Breast epithelium (tissue), 4 donors: ENCODE measurements at regions of chr21 and their contacts with region 1.

Region 1: DNA sequence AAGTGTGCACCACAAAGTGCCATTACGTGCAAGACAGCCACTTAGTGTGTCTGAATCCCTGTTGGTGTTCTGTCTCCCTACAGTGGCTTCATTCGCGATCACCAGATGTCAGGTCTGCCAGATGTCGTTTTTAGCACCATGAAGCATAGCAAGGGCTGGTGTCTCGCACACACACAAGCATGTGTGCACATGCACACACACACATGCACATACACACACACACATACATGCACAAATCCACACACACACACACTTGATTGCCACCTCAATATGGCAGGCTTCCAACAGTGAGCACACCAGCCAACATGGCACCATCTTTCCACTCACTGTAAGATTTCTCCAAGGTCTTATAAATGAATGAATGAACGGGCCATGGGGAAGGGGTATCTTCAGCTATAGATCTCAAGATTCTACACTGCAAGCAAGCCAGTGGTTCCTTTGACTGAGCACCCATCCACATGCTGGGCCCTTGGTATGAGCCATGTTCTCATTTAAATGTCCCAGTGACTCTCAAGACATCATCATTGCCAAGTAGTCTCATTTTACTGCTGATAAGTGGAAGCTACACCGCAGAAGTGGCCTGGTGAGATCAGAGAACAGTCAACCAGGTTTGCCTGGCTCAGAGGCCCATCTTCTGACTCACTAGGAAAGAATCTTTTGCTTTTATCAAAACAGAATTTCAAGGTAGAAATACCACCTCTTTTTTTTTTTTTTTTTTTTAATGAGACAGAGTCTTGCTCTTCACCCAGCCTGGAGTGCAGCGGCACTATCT is 84.9 kb downstream of the SIM2 start:
- DNase-seq: no peak
- H3K4me3 ChIP-seq: no peak overlapping the region
- H3K27ac ChIP-seq: no peak overlapping the region
- H3K4me1 ChIP-seq: no peaks in the 10 kb centered on the region
- H3K27me3 ChIP-seq: no peaks in the 10 kb centered on the region
- CTCF ChIP-seq: no peak
- POLR2A ChIP-seq: no peak

Region 2: GRCh38 chr21:36047139-36047538 is 736.7 kb before region 1 on chr21:
- intact Hi-C with region 1: no loop called
- DNase-seq: no peak
- H3K4me3 ChIP-seq: no peak overlapping the region
- H3K27ac ChIP-seq: no peak overlapping the region
- H3K4me1 ChIP-seq: no peaks in the 10 kb centered on the region
- H3K27me3 ChIP-seq: no peaks in the 10 kb centered on the region
- CTCF ChIP-seq: no peak
- POLR2A ChIP-seq: no peak

Region 3: DNA sequence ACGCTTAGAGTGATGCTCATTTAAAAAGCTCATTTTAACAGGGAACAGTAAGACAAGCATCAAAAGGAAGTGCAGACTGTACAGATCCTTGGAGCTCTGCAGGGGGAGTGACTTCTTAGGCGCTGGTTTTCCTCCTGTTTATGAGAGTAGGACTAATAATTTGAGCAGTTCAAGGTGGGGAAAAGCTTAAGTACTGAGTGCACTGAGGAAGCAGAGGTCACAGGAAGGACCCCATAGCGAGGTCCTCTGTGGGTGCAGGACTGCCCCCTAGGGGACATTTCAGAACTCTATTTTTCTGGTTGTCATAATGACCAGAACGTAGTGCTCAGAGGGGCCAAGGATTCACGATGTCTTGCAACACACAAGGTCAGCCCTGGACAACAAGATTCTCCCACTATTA is 70.6 kb after region 1 on chr21:
- intact Hi-C with region 1: loop called (anchors 2 kb)
- DNase-seq: no peak
- H3K4me3 ChIP-seq: no peak overlapping the region
- H3K27ac ChIP-seq: no peak overlapping the region
- H3K4me1 ChIP-seq: no peaks in the 10 kb centered on the region
- H3K27me3 ChIP-seq: no peaks in the 10 kb centered on the region
- CTCF ChIP-seq: no peak
- POLR2A ChIP-seq: no peak